A673 (cell line): ENCODE measurements at regions of chr9 and their contacts with region 1.

Region 1: DNA sequence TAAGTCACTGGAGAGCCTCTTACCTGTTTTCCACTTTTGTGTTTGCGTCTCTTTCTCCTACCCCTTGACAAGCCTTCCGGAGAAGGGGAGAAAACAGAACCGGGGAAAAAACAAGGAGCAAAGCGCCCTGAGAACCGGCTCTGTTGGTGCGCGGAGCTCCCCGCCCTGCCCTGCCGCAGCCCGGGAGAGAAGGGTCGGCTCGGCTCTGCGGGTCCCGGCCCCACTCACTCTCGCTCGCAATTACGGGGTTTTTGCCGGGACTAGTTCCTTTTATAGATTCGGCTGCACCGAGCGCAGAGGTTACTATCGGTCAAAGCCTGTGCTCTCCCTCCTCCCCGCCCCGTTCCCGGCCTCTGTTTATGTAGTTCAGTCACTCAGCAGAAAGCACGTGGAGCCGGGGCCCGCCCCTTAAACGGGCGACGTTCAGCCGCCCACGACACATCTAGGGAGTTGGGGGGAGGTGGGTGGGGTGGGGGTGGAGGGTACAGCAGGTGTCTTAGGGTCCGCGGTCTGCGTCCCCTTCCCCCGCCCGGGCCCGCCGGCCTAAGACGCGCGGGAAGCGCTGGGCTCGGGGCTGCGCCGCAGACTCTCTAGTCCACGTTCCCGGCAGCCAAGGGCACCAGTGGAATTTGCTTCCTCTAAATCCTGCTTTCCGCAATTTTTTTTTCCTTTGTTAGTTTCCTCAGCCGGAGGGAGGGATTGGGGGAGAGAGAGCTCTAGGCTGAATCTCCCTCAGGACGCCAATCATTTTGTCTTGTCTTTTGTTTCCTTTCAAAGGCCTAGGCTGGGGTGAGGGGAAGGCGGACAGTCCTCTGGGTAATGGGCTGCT is at the start of gene ABCA1:
- DNase-seq: peak; percentile 79
- H3K4me3 ChIP-seq: peak within 1 kb of the TSS; percentile 47
- H3K27ac ChIP-seq: no peak within 1 kb of the TSS
- H3K4me1 ChIP-seq: no peaks in the 10 kb centered on the region
- H3K27me3 ChIP-seq: no peaks in the 10 kb centered on the region
- CTCF ChIP-seq: no peak
- total RNA-seq, gene ABCA1: 0.69 and 1.6 TPM in 2 replicates

Region 2: GRCh38 chr9:104863180-104863883 is 64.8 kb before region 1 on chr9:
- CTCF ChIA-PET with region 1: interaction called, 5 read pairs
- POLR2A ChIA-PET with region 1: no interaction called
- intact Hi-C with region 1: loop called (anchors 1 kb)
- DNase-seq: peak; percentile 76
- H3K4me3 ChIP-seq: no peak overlapping the region
- H3K27ac ChIP-seq: no peak overlapping the region
- H3K4me1 ChIP-seq: peaks cover 7% of the 10 kb centered on the region
- H3K27me3 ChIP-seq: no peaks in the 10 kb centered on the region
- CTCF ChIP-seq: peak; percentile 92

Region 3: DNA sequence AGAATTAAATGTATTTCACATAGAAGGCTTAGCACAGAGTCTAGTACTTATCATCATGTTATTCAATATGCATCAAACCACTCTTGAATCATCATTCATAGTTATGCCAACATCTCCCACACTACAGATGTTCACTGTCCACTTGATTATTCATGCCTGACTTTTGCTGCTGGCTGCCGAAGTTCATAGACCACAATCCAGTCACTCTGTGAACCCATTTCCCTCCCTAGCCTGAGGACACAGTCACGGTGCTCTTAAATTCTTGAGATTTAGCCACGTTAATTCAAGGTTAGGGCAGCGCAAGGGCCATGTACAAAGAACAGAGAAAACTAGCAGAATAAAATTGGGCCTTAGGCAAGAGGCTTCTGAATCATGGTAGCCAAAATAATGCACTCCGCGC is 32.6 kb before region 1 on chr9:
- CTCF ChIA-PET with region 1: no interaction called
- POLR2A ChIA-PET with region 1: no interaction called
- intact Hi-C with region 1: no loop called
- DNase-seq: no peak
- H3K4me3 ChIP-seq: no peak overlapping the region
- H3K27ac ChIP-seq: no peak overlapping the region
- H3K4me1 ChIP-seq: no peaks in the 10 kb centered on the region
- H3K27me3 ChIP-seq: no peaks in the 10 kb centered on the region
- CTCF ChIP-seq: no peak

Region 4: GRCh38 chr9:104968025-104968982 is 40.2 kb after region 1 on chr9:
- CTCF ChIA-PET with region 1: no interaction called
- POLR2A ChIA-PET with region 1: no interaction called
- intact Hi-C with region 1: loop called (anchors 1 kb)
- DNase-seq: peak; percentile 89
- H3K4me3 ChIP-seq: peak overlapping the region; percentile 60
- H3K27ac ChIP-seq: peak overlapping the region; percentile 78
- H3K4me1 ChIP-seq: no peaks in the 10 kb centered on the region
- H3K27me3 ChIP-seq: no peaks in the 10 kb centered on the region
- CTCF ChIP-seq: no peak

Region 5: GRCh38 chr9:105187778-105188177 is 259.7 kb after region 1 on chr9:
- CTCF ChIA-PET with region 1: no interaction called
- POLR2A ChIA-PET with region 1: no interaction called
- intact Hi-C with region 1: no loop called
- DNase-seq: no peak
- H3K4me3 ChIP-seq: no peak overlapping the region
- H3K27ac ChIP-seq: no peak overlapping the region
- H3K4me1 ChIP-seq: no peaks in the 10 kb centered on the region
- H3K27me3 ChIP-seq: no peaks in the 10 kb centered on the region
- CTCF ChIP-seq: no peak

Region 6: GRCh38 chr9:105414947-105415661 is 487.0 kb after region 1 on chr9:
- CTCF ChIA-PET with region 1: no interaction called
- POLR2A ChIA-PET with region 1: no interaction called
- intact Hi-C with region 1: loop called (anchors 5 kb)
- DNase-seq: peak; percentile 66
- H3K4me3 ChIP-seq: no peak overlapping the region
- H3K27ac ChIP-seq: no peak overlapping the region
- H3K4me1 ChIP-seq: no peaks in the 10 kb centered on the region
- H3K27me3 ChIP-seq: no peaks in the 10 kb centered on the region
- CTCF ChIP-seq: peak; percentile 91